ENCODE measurements at regions of chr19 and their contacts with region 1.

Region 1: GRCh38 chr19:57103573-57104277 is 16.1 kb upstream of the USP29 start:
- DNase-seq: no peak
- H3K4me3 ChIP-seq: peak overlapping the region in 3 of 8 donors; percentile 1 to 54 (median 23)
- H3K27ac ChIP-seq: no peak overlapping the region
- H3K4me1 ChIP-seq: peaks cover 0 to 13% (median 4%) of the 10 kb centered on the region in 6 donors
- H3K27me3 ChIP-seq: peaks cover 5 to 47% (median 17%) of the 10 kb centered on the region in 7 donors
- CTCF ChIP-seq: peak; percentile 55 to 94 (median 86)
- POLR2A ChIP-seq: no peak

Region 2: GRCh38 chr19:56973713-56974555 is 129.8 kb before region 1 on chr19:
- intact Hi-C with region 1: no loop called
- DNase-seq: no peak
- H3K4me3 ChIP-seq: no peak overlapping the region
- H3K27ac ChIP-seq: no peak overlapping the region
- H3K4me1 ChIP-seq: no peaks in the 10 kb centered on the region
- H3K27me3 ChIP-seq: peaks cover 0 to 19% (median 0%) of the 10 kb centered on the region in 7 donors
- CTCF ChIP-seq: no peak
- POLR2A ChIP-seq: no peak

Region 3: GRCh38 chr19:57037556-57037955 is 66.2 kb before region 1 on chr19:
- intact Hi-C with region 1: no loop called
- DNase-seq: no peak
- H3K4me3 ChIP-seq: no peak overlapping the region
- H3K27ac ChIP-seq: no peak overlapping the region
- H3K4me1 ChIP-seq: no peaks in the 10 kb centered on the region
- H3K27me3 ChIP-seq: no peaks in the 10 kb centered on the region
- CTCF ChIP-seq: no peak
- POLR2A ChIP-seq: no peak

Region 4: GRCh38 chr19:57171551-57172081 is 67.9 kb after region 1 on chr19:
- intact Hi-C with region 1: no loop called
- DNase-seq: peak; percentile 77
- H3K4me3 ChIP-seq: peak overlapping the region in 7 of 8 donors; percentile 11 to 73 (median 39)
- H3K27ac ChIP-seq: peak overlapping the region in 6 of 8 donors; percentile 34 to 66 (median 60)
- H3K4me1 ChIP-seq: peaks cover 0 to 17% (median 4%) of the 10 kb centered on the region in 6 donors
- H3K27me3 ChIP-seq: no peaks in the 10 kb centered on the region
- CTCF ChIP-seq: no peak
- POLR2A ChIP-seq: no peak

Region 5: GRCh38 chr19:57903618-57904184 is 800.0 kb after region 1 on chr19:
- intact Hi-C with region 1: loop called (anchors 10 kb)
- DNase-seq: no peak
- H3K4me3 ChIP-seq: no peak overlapping the region
- H3K27ac ChIP-seq: no peak overlapping the region
- H3K4me1 ChIP-seq: peaks cover 0 to 17% (median 0%) of the 10 kb centered on the region in 6 donors
- H3K27me3 ChIP-seq: no peaks in the 10 kb centered on the region
- CTCF ChIP-seq: peak in 1 of 11 experiments; percentile 15
- POLR2A ChIP-seq: no peak

Measured in spleen (tissue), 13 donors.